ENCODE measurements at regions of chr22 and their contacts with region 1.

Region 1: GRCh38 chr22:38872172-38872830 is at the start of gene CBX6:
- DNase-seq: peak; percentile 92
- H3K4me3 ChIP-seq: peak within 1 kb of the TSS; percentile 76 to 82 (median 79)
- H3K27ac ChIP-seq: peak within 1 kb of the TSS; percentile 21
- H3K4me1 ChIP-seq: peaks cover 17% of the 10 kb centered on the region
- H3K27me3 ChIP-seq: peaks cover 14 to 25% of the 10 kb centered on the region in 2 experiments
- CTCF ChIP-seq: no peak
- POLR2A ChIP-seq: peak; percentile 80
- total RNA-seq, gene CBX6: 60.9 and 62.6 TPM in 2 replicates

Region 2: DNA sequence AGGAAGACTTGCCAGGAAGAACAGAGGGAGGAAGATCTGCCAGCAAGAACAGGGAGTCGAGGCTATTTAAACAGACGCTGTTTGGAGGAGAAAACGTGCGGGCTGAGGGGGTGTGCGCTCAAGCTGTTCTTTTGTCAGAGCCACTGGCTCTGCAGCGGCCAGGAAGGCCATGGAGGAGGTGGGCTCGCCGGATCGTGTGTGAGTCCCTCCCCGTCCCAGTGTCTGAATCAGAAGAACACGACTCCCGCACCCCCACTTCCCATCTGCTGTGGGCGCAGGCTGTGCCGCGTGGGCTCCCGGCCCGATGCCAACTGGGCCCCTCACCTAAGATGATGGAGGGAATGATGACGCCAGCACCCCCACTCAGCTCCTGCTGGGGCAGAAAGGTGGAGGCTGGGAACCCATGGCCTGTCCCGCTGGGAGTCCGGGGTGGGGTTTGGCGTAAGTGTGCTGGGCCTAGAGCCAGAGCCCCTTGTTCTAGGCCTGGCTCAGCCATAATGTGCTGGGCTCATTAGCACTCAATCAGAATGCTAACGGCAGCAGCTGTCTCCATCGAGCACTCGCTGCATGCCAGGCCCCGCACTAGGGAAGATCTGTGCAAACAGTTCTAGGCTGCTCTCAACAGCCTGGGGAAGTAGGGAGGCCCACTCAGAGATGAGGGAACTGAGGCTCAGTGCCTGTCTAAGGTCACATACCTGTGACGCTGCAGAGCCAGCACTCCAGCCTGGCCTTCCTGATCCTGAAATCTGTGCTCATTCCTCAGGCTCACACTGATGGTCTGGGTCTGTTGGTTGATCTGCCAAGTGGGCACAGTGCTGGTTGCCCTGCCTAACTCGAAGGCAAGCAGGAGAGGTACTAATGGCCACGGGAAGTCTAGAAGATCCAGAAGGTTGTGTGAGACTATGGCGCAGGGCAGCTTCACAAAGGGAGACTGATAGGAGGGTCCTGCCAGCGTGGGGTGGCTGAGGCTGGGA is 40.0 kb before region 1 on chr22:
- CTCF ChIA-PET with region 1: no interaction called
- POLR2A ChIA-PET with region 1: no interaction called
- dilution Hi-C with region 1: no loop called
- intact Hi-C with region 1: no loop called
- DNase-seq: no peak
- H3K4me3 ChIP-seq: no peak overlapping the region
- H3K27ac ChIP-seq: no peak overlapping the region
- H3K4me1 ChIP-seq: no peaks in the 10 kb centered on the region
- H3K27me3 ChIP-seq: no peaks in the 10 kb centered on the region
- CTCF ChIP-seq: no peak
- POLR2A ChIP-seq: no peak

Region 3: DNA sequence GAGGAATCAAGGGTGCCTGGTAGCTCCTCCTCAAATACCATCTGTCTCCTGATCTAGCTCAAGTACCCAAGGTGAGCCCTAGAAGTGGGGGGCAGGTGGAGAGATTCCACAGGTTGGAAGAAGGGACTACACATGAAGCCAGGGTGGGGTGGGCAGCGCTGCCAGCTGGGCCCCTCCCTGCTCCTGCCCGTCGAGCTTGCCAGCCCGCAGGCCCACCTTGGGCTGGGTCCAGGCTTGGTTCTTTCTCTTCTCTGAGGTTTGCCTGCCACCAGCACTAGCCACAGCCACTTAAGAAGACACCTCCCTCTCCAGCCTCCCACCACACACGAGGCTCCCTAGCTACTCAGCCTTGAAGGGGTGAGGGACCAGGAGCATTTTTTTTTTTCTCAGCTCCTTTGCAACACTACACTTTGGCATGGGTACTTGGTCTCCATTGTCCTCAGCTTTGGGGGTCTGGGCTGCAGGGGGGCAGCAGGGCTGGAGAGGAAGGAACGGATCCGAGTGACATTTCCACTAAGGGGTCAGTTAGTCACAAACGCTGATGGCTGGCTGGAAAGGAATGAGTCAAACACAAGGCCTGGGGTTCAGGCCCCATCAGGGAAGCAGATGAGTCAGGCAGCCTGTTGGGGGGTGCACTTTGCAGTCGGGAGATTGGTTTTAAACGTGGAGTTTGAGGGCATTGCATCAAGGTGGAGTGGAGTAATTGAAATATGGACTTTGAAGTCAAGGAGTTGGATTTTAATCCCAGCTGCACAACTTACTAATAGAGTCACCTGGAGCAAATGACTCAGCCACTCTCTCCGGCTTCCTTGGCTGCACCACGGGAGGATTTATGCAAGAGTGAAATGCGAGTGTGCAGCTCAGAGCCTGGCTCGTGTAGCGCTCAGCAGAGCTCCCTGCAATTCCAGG is 21.1 kb before region 1 on chr22:
- CTCF ChIA-PET with region 1: interaction called, 10 read pairs
- POLR2A ChIA-PET with region 1: no interaction called
- dilution Hi-C with region 1: no loop called
- intact Hi-C with region 1: no loop called
- DNase-seq: no peak
- H3K4me3 ChIP-seq: no peak overlapping the region
- H3K27ac ChIP-seq: no peak overlapping the region
- H3K4me1 ChIP-seq: no peaks in the 10 kb centered on the region
- H3K27me3 ChIP-seq: peaks cover 5 to 6% of the 10 kb centered on the region in 2 experiments
- CTCF ChIP-seq: no peak
- POLR2A ChIP-seq: no peak

Region 4: DNA sequence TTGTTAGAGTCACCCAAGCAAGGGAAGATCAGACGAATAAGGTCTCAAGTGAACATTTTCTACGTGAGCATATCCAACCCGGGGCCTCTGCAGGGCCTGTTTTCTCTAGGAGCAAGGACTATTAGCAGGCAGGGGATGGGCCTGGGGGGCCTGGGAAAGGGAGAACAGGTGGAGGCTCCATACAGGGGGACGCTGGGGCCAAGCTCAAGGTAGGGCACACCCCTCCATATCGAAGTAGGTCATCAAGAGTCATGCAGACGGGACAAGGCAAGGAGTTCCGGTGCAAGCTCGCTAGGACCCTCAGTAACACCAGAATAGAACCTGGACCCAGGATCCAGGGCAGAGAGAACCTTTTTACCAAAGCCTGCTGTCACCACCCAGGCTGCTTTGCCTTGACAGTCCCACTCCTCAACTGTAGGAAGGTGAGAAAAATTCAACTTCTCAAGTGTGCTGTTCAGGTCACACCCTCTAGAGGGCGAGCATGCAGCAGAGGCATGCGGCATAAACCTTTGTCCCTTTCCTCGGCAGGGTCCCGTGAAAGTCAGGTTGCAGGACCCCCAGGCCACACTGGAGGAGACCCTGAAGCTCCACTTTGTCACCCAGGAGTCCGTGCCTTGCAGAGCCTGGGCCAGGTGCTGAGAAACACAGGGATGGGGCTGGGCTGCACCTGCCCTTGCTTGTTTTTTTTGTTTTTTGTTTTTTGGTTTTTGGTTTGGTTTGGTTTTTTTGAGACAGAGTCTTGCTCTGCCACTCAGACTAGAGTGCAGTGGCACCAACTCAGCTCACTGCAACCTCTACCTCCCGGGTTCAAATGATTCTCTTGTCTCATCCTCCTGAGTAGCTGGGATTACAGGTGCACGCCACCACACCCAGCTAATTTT is 101.2 kb after region 1 on chr22:
- CTCF ChIA-PET with region 1: interaction called, 45 read pairs
- POLR2A ChIA-PET with region 1: no interaction called
- dilution Hi-C with region 1: no loop called
- intact Hi-C with region 1: no loop called
- DNase-seq: peak; percentile 46
- H3K4me3 ChIP-seq: no peak overlapping the region
- H3K27ac ChIP-seq: no peak overlapping the region
- H3K4me1 ChIP-seq: no peaks in the 10 kb centered on the region
- H3K27me3 ChIP-seq: no peaks in the 10 kb centered on the region
- CTCF ChIP-seq: peak; percentile 74 to 83
- POLR2A ChIP-seq: no peak

Region 5: DNA sequence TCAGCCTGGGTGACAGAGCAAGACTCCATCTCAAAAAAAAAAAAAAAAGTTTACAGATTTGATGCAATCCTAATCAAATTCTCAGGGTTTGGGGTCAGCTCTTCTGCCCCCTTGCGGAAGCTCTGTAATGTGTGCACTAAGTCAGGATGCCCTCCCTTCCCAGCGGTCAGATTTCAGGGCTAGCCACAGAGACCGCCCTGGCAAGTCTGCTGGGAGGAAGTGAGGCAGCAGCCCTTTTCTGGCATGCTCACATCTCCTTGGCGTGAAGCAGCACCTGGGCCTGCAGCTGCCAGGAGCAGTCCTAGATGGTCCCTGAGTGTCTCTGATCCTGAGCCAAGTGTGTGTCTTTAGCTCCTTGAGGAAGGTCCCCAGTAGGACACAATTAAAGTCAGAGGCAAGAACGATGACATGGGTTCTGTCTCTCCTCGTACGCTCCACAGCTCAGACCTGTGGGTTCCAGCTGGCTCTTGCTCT is 130.9 kb after region 1 on chr22:
- CTCF ChIA-PET with region 1: interaction called, 160 read pairs
- POLR2A ChIA-PET with region 1: interaction called, 3 read pairs
- dilution Hi-C with region 1: no loop called
- intact Hi-C with region 1: loop called (anchors 1 kb)
- DNase-seq: peak; percentile 83
- H3K4me3 ChIP-seq: no peak overlapping the region
- H3K27ac ChIP-seq: no peak overlapping the region
- H3K4me1 ChIP-seq: no peaks in the 10 kb centered on the region
- H3K27me3 ChIP-seq: no peaks in the 10 kb centered on the region
- CTCF ChIP-seq: peak; percentile 67 to 72
- POLR2A ChIP-seq: no peak

Region 6: DNA sequence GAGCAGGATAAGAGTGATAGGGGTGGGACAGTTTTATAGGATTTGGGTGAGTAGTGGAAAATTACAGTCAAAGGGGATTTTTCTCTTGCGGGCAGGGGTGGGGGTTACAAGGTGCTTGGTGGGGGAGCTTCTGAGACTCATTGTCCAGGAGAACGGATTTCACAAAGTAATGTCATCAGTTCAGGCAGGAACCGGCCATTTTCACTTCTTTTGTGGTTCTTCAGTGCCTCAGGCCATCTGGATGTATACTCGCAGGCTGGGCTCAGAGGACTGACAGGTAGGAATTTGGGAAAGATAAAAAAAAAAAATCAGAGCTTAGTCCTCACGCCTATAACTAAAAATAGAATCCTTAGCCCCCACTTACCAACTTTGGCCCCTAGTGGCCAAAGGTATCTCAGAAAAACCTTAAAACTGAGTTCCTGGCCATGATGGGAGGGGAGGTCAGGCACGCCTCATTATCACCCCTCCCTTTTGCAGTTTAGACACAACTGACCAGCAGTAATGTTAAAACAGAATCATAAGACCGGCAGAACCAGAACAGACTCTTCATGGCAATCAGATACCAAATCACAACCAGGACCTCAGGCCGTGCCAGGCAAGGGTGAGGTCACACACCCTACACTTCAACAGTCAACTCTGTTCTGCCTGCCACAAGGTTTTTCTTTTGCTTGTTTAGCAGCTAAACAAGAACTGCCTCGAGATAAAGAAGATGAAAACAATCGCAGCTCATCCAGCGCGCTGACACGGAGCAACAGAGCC is 195.9 kb after region 1 on chr22:
- CTCF ChIA-PET with region 1: no interaction called
- POLR2A ChIA-PET with region 1: no interaction called
- dilution Hi-C with region 1: no loop called
- intact Hi-C with region 1: no loop called
- DNase-seq: no peak
- H3K4me3 ChIP-seq: no peak overlapping the region
- H3K27ac ChIP-seq: no peak overlapping the region
- H3K4me1 ChIP-seq: no peaks in the 10 kb centered on the region
- H3K27me3 ChIP-seq: peaks cover 0 to 1% of the 10 kb centered on the region in 2 experiments
- CTCF ChIP-seq: no peak
- POLR2A ChIP-seq: no peak

Region 7: GRCh38 chr22:39170825-39171622 is 298.7 kb after region 1 on chr22:
- CTCF ChIA-PET with region 1: no interaction called
- POLR2A ChIA-PET with region 1: no interaction called
- dilution Hi-C with region 1: no loop called
- intact Hi-C with region 1: no loop called
- DNase-seq: peak; percentile 76
- H3K4me3 ChIP-seq: no peak overlapping the region
- H3K27ac ChIP-seq: peak overlapping the region; percentile 51
- H3K4me1 ChIP-seq: peaks cover 48% of the 10 kb centered on the region
- H3K27me3 ChIP-seq: no peaks in the 10 kb centered on the region
- CTCF ChIP-seq: peak; percentile 86 to 94
- POLR2A ChIP-seq: no peak

Region 8: GRCh38 chr22:39236321-39237317 is 364.3 kb after region 1 on chr22:
- CTCF ChIA-PET with region 1: no interaction called
- POLR2A ChIA-PET with region 1: no interaction called
- dilution Hi-C with region 1: no loop called
- intact Hi-C with region 1: loop called (anchors 10 kb)
- DNase-seq: no peak
- H3K4me3 ChIP-seq: no peak overlapping the region
- H3K27ac ChIP-seq: peak overlapping the region; percentile 88
- H3K4me1 ChIP-seq: peaks cover 91% of the 10 kb centered on the region
- H3K27me3 ChIP-seq: no peaks in the 10 kb centered on the region
- CTCF ChIP-seq: no peak
- POLR2A ChIP-seq: peak; percentile 19

Measured in endothelial cell of umbilical vein (primary cell).